Heart right ventricle (tissue), 16 donors: ENCODE measurements at regions of chr18 and their contacts with region 1.

Region 1: GRCh38 chr18:48680339-48681221 is 141.7 kb downstream of the CTIF start:
- DNase-seq: peak; percentile 86 to 93
- ATAC-seq: peak; percentile 82 to 95 (median 93)
- H3K4me3 ChIP-seq: no peak overlapping the region
- H3K27ac ChIP-seq: peak overlapping the region; percentile 70 to 93 (median 86)
- H3K4me1 ChIP-seq: peaks cover 16 to 96% (median 63%) of the 10 kb centered on the region in 9 donors
- H3K27me3 ChIP-seq: no peaks in the 10 kb centered on the region
- CTCF ChIP-seq: peak in 7 of 9 donors; percentile 10 to 60 (median 42)

Region 2: DNA sequence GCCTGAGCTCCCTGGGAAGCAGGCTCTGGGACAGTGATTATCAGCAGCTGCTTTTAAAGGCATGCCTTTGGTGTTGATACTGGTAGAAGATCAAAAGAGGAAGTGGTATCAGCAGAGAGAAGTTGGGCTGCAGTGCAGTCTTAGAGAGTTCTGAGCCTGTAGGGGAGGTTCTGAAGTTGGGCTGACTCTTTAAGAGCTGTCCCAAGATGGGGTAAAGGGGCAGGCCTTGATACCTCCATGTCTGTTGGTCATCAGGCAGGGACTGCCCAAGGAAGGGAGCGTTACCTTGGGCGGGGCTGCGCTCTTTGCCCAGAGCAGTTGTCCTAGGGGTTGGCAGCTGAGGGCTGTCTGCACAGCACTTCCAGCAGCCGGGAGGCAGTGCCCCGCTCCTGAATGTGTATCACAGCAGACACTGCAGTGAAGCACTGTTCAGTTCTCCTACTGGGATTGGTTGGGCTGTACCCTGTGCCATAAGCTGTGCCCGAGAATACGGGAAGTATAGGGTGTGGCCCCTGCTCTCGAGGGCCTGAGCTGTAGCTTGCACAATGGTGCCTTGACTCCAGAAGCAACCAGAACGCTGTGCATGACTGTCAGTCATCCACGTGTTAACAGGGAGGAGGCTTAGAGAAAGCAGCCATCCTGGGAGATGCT is 35.3 kb after region 1 on chr18:
- intact Hi-C with region 1: no loop called
- DNase-seq: no peak
- ATAC-seq: peak in 4 of 8 donors; percentile 24 to 68 (median 36)
- H3K4me3 ChIP-seq: no peak overlapping the region
- H3K27ac ChIP-seq: peak overlapping the region in 1 of 10 donors; percentile 78
- H3K4me1 ChIP-seq: peaks cover 23 to 70% (median 44%) of the 10 kb centered on the region in 9 donors
- H3K27me3 ChIP-seq: no peaks in the 10 kb centered on the region
- CTCF ChIP-seq: no peak

Region 3: GRCh38 chr18:48742706-48743475 is 62.3 kb after region 1 on chr18:
- intact Hi-C with region 1: loop called in 3 of 10 experiments (anchors 2 to 10 kb)
- DNase-seq: peak; percentile 37 to 61
- ATAC-seq: peak in 7 of 8 donors; percentile 62 to 89 (median 67)
- H3K4me3 ChIP-seq: no peak overlapping the region
- H3K27ac ChIP-seq: peak overlapping the region in 5 of 10 donors; percentile 41 to 85 (median 54)
- H3K4me1 ChIP-seq: peaks cover 12 to 54% (median 43%) of the 10 kb centered on the region in 9 donors
- H3K27me3 ChIP-seq: no peaks in the 10 kb centered on the region
- CTCF ChIP-seq: no peak

Region 4: GRCh38 chr18:48777026-48777743 is 96.6 kb after region 1 on chr18:
- intact Hi-C with region 1: loop called in 8 of 10 experiments (anchors 2 to 10 kb)
- DNase-seq: peak in 1 of 2 donors; percentile 72
- ATAC-seq: peak in 6 of 8 donors; percentile 5 to 27 (median 18)
- H3K4me3 ChIP-seq: no peak overlapping the region
- H3K27ac ChIP-seq: peak overlapping the region in 4 of 10 donors; percentile 27 to 99 (median 60)
- H3K4me1 ChIP-seq: peaks cover 43 to 88% (median 70%) of the 10 kb centered on the region in 9 donors
- H3K27me3 ChIP-seq: no peaks in the 10 kb centered on the region
- CTCF ChIP-seq: peak; percentile 82 to 96 (median 90)

Region 5: GRCh38 chr18:48834413-48835031 is 153.9 kb after region 1 on chr18:
- intact Hi-C with region 1: loop called in 2 of 10 experiments (anchors 5 to 10 kb)
- DNase-seq: peak; percentile 61 to 67
- ATAC-seq: peak; percentile 53 to 81 (median 72)
- H3K4me3 ChIP-seq: peak overlapping the region in 1 of 10 donors; percentile 46
- H3K27ac ChIP-seq: peak overlapping the region in 3 of 10 donors; percentile 12 to 83 (median 57)
- H3K4me1 ChIP-seq: peaks cover 10 to 72% (median 45%) of the 10 kb centered on the region in 9 donors
- H3K27me3 ChIP-seq: no peaks in the 10 kb centered on the region
- CTCF ChIP-seq: no peak

Region 6: GRCh38 chr18:48940854-48941611 is 260.5 kb after region 1 on chr18:
- intact Hi-C with region 1: loop called in 6 of 10 experiments (anchors 5 to 10 kb)
- DNase-seq: no peak
- ATAC-seq: no peak
- H3K4me3 ChIP-seq: peak overlapping the region in 5 of 10 donors; percentile 1 to 94 (median 43)
- H3K27ac ChIP-seq: peak overlapping the region in 9 of 10 donors; percentile 63 to 99 (median 81)
- H3K4me1 ChIP-seq: peaks cover 59 to 99% (median 97%) of the 10 kb centered on the region in 9 donors
- H3K27me3 ChIP-seq: no peaks in the 10 kb centered on the region
- CTCF ChIP-seq: no peak